ENCODE measurements at regions of chr6 and their contacts with region 1.

Region 1: GRCh38 chr6:106097411-106098231 is 11.5 kb downstream of the PRDM1 start:
- DNase-seq: peak in 7 of 9 experiments; percentile 37 to 93 (median 66)
- ATAC-seq: peak; percentile 65
- H3K4me3 ChIP-seq: peak overlapping the region; percentile 49 to 73
- H3K4me3 Mint-ChIP-seq: peak overlapping the region; percentile 90
- H3K27ac ChIP-seq: peak overlapping the region; percentile 42 to 79
- H3K27ac Mint-ChIP-seq: peak overlapping the region; percentile 92
- H3K4me1 ChIP-seq: peaks cover 39% of the 10 kb centered on the region
- H3K4me1 Mint-ChIP-seq: peaks cover 75% of the 10 kb centered on the region
- H3K27me3 ChIP-seq: no peaks in the 10 kb centered on the region
- H3K27me3 Mint-ChIP-seq: peaks cover 4% of the 10 kb centered on the region
- CTCF ChIP-seq: no peak

Region 2: GRCh38 chr6:106056060-106056745 is 41.4 kb before region 1 on chr6:
- CTCF ChIA-PET with region 1: no interaction called
- POLR2A ChIA-PET with region 1: no interaction called
- intact Hi-C with region 1: loop called in 1 of 2 experiments (anchors 5 kb)
- DNase-seq: peak in 3 of 9 experiments; percentile 8 to 68 (median 54)
- ATAC-seq: peak; percentile 67
- H3K4me3 ChIP-seq: no peak overlapping the region
- H3K4me3 Mint-ChIP-seq: peak overlapping the region; percentile 3
- H3K27ac ChIP-seq: no peak overlapping the region
- H3K27ac Mint-ChIP-seq: no peak overlapping the region
- H3K4me1 ChIP-seq: peaks cover 19% of the 10 kb centered on the region
- H3K4me1 Mint-ChIP-seq: peaks cover 17% of the 10 kb centered on the region
- H3K27me3 ChIP-seq: peaks cover 0 to 2% of the 10 kb centered on the region in 2 experiments
- H3K27me3 Mint-ChIP-seq: peaks cover 2% of the 10 kb centered on the region
- CTCF ChIP-seq: no peak

Region 3: DNA sequence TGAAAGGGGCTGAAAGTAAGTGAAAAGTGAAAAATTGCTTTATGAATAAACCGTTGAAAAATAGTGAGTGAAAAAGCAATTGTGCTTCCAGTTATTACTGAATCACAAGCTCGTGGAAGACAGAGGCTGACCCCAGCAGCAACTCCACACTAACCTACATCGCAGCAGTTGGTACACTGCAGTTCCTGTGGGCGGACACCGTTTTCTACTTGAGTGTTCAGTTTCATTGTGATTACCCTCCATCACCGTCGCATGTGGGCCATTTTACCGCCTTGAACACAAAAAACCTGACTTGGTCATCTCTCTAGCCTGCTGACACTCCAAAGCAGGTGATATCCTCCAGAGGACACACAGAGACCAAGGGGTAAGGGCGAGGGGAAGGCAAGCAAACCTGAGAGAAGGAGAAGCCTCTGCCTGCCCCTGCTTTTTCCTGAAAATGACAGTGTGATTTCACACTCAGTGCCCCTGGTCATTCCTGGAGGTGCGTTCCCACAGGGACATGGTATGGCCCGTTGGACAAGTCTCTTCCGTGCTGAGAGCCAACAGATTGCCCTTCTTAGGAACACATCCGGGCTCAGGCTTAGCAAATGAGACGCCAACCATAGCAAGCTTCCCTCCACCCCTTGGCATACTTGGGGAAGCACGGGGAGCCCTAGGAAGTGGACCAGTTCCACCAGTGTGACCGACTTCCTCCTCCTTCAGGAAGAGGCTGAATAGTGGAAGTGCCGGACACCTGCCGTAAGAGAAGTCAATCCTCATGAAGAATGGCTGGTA is 17.1 kb after region 1 on chr6:
- CTCF ChIA-PET with region 1: interaction called, 4 read pairs
- POLR2A ChIA-PET with region 1: interaction called, 17 read pairs
- intact Hi-C with region 1: loop called (anchors 1 to 2 kb)
- DNase-seq: peak in 3 of 9 experiments; percentile 37 to 66 (median 60)
- ATAC-seq: peak; percentile 15
- H3K4me3 ChIP-seq: peak overlapping the region in 1 of 2 experiments; percentile 7
- H3K4me3 Mint-ChIP-seq: peak overlapping the region; percentile 55
- H3K27ac ChIP-seq: peak overlapping the region in 1 of 2 experiments; percentile 61
- H3K27ac Mint-ChIP-seq: peak overlapping the region; percentile 58
- H3K4me1 ChIP-seq: peaks cover 55% of the 10 kb centered on the region
- H3K4me1 Mint-ChIP-seq: peaks cover 57% of the 10 kb centered on the region
- H3K27me3 ChIP-seq: no peaks in the 10 kb centered on the region
- H3K27me3 Mint-ChIP-seq: peaks cover 21% of the 10 kb centered on the region
- CTCF ChIP-seq: no peak

Region 4: DNA sequence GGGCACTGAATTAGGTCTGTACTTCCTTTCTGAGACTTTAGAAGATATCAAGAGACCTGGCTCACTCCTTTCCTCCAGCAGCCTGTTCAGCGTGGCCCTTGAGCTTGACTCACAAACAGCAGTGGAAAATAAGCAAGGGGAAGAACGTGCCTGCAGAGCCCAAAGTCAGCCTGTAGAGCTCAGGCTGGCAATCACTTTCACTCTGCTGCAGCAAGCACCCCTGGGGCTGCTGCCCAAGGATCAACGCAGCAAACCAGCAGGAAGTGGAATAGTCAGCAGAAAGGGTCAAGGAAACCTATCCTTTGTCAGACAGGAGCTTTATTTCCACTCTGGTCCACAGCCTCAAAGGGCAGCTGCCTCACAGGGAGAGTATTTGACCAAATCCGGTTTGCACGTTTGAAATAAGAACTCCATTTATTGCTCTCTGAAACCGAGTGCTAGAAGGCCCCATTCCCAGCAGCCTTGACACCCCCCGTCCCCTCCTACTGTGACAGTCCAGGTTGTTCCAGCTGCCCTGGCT is 65.9 kb after region 1 on chr6:
- CTCF ChIA-PET with region 1: no interaction called
- POLR2A ChIA-PET with region 1: interaction called, 5 read pairs
- intact Hi-C with region 1: loop called in 1 of 2 experiments (anchors 1 kb)
- DNase-seq: peak in 6 of 9 experiments; percentile 28 to 77 (median 53)
- ATAC-seq: peak; percentile 73
- H3K4me3 ChIP-seq: no peak overlapping the region
- H3K4me3 Mint-ChIP-seq: peak overlapping the region; percentile 53
- H3K27ac ChIP-seq: peak overlapping the region; percentile 38 to 92
- H3K27ac Mint-ChIP-seq: peak overlapping the region; percentile 90
- H3K4me1 ChIP-seq: peaks cover 25% of the 10 kb centered on the region
- H3K4me1 Mint-ChIP-seq: peaks cover 25% of the 10 kb centered on the region
- H3K27me3 ChIP-seq: no peaks in the 10 kb centered on the region
- H3K27me3 Mint-ChIP-seq: peaks cover 3% of the 10 kb centered on the region
- CTCF ChIP-seq: no peak

Region 5: DNA sequence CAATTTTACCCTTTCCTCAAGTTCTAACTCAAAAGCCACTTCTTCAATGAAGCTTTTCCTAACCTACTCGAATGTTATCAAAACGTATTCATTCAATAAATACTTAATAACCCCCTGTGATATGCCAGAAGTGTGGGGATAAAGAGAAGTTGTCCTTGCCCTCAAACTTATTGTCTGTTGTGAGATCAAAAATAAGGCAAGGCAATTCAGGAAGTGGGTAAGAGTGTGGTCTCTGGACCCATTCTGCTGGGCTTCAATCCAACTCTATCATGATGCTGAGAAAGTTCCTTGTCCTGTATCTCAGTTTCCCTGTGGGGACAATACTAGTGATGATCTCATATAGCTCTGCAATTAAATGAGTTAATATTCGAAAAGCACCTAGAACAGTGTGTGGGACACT is 81.3 kb after region 1 on chr6:
- CTCF ChIA-PET with region 1: no interaction called
- POLR2A ChIA-PET with region 1: no interaction called
- intact Hi-C with region 1: no loop called
- DNase-seq: no peak
- ATAC-seq: no peak
- H3K4me3 ChIP-seq: no peak overlapping the region
- H3K4me3 Mint-ChIP-seq: no peak overlapping the region
- H3K27ac ChIP-seq: no peak overlapping the region
- H3K27ac Mint-ChIP-seq: no peak overlapping the region
- H3K4me1 ChIP-seq: peaks cover 3% of the 10 kb centered on the region
- H3K4me1 Mint-ChIP-seq: peaks cover 4% of the 10 kb centered on the region
- H3K27me3 ChIP-seq: no peaks in the 10 kb centered on the region
- H3K27me3 Mint-ChIP-seq: peaks cover 2% of the 10 kb centered on the region
- CTCF ChIP-seq: no peak

Region 6: GRCh38 chr6:106194949-106195921 is 97.6 kb after region 1 on chr6:
- CTCF ChIA-PET with region 1: no interaction called
- POLR2A ChIA-PET with region 1: interaction called, 3 read pairs
- intact Hi-C with region 1: loop called (anchors 1 to 2 kb)
- DNase-seq: peak in 6 of 9 experiments; percentile 12 to 79 (median 44)
- ATAC-seq: peak; percentile 82
- H3K4me3 ChIP-seq: peak overlapping the region in 1 of 2 experiments; percentile 12
- H3K4me3 Mint-ChIP-seq: peak overlapping the region; percentile 46
- H3K27ac ChIP-seq: peak overlapping the region; percentile 13 to 71
- H3K27ac Mint-ChIP-seq: peak overlapping the region; percentile 81
- H3K4me1 ChIP-seq: peaks cover 35% of the 10 kb centered on the region
- H3K4me1 Mint-ChIP-seq: peaks cover 37% of the 10 kb centered on the region
- H3K27me3 ChIP-seq: no peaks in the 10 kb centered on the region
- H3K27me3 Mint-ChIP-seq: no peaks in the 10 kb centered on the region
- CTCF ChIP-seq: no peak

Region 7: GRCh38 chr6:106519460-106520394 is 422.1 kb after region 1 on chr6:
- CTCF ChIA-PET with region 1: no interaction called
- POLR2A ChIA-PET with region 1: no interaction called
- intact Hi-C with region 1: loop called (anchors 5 kb)
- DNase-seq: peak; percentile 41 to 93 (median 77)
- ATAC-seq: peak; percentile 50
- H3K4me3 ChIP-seq: peak overlapping the region; percentile 48 to 51
- H3K4me3 Mint-ChIP-seq: peak overlapping the region; percentile 91
- H3K27ac ChIP-seq: peak overlapping the region; percentile 79 to 82
- H3K27ac Mint-ChIP-seq: peak overlapping the region; percentile 96
- H3K4me1 ChIP-seq: peaks cover 48% of the 10 kb centered on the region
- H3K4me1 Mint-ChIP-seq: peaks cover 76% of the 10 kb centered on the region
- H3K27me3 ChIP-seq: no peaks in the 10 kb centered on the region
- H3K27me3 Mint-ChIP-seq: no peaks in the 10 kb centered on the region
- CTCF ChIP-seq: no peak

Measured in CD8-positive, alpha-beta T cell (primary cell).